ENCODE measurements at regions of chr2 and their contacts with region 1.

Region 1: GRCh38 chr2:152189622-152190495 is 14.3 kb upstream of the STAM2 start:
- DNase-seq: no peak
- ATAC-seq: peak; percentile 94

Region 2: GRCh38 chr2:152335010-152335725 is 145.3 kb after region 1 on chr2 and contains the start of gene FMNL2:
- intact Hi-C with region 1: loop called (anchors 10 kb)
- DNase-seq: peak; percentile 91
- ATAC-seq: peak; percentile 90
- total RNA-seq, gene FMNL2: 129 TPM

Region 3: GRCh38 chr2:152682663-152683062 is 492.8 kb after region 1 on chr2:
- intact Hi-C with region 1: no loop called
- DNase-seq: no peak
- ATAC-seq: no peak

Measured in sciatic nerve (tissue), 2 donors.